MCF 10A (cell line): ENCODE measurements at regions of chr3 and their contacts with region 1.

Region 1: GRCh38 chr3:153043729-153044328 is 118.2 kb upstream of the RAP2B start:
- DNase-seq: peak; percentile 86
- H3K4me3 Mint-ChIP-seq: peak overlapping the region; percentile 63
- H3K27ac Mint-ChIP-seq: peak overlapping the region; percentile 82
- H3K4me1 Mint-ChIP-seq: peaks cover 8% of the 10 kb centered on the region
- H3K27me3 Mint-ChIP-seq: no peaks in the 10 kb centered on the region
- CTCF ChIP-seq: no peak

Region 2: GRCh38 chr3:153061938-153062528 is 18.2 kb after region 1 on chr3:
- CTCF ChIA-PET with region 1: interaction called, 3 read pairs
- POLR2A ChIA-PET with region 1: interaction called, 6 read pairs
- intact Hi-C with region 1: loop called (anchors 1 kb)
- DNase-seq: no peak
- H3K4me3 Mint-ChIP-seq: no peak overlapping the region
- H3K27ac Mint-ChIP-seq: no peak overlapping the region
- H3K4me1 Mint-ChIP-seq: peaks cover 9% of the 10 kb centered on the region
- H3K27me3 Mint-ChIP-seq: no peaks in the 10 kb centered on the region
- CTCF ChIP-seq: no peak

Region 3: GRCh38 chr3:153138276-153139210 is 94.7 kb after region 1 on chr3:
- CTCF ChIA-PET with region 1: interaction called, 3 read pairs
- POLR2A ChIA-PET with region 1: interaction called, 8 read pairs
- intact Hi-C with region 1: loop called (anchors 2 kb)
- DNase-seq: peak; percentile 99
- H3K4me3 Mint-ChIP-seq: peak overlapping the region; percentile 19
- H3K27ac Mint-ChIP-seq: peak overlapping the region; percentile 90
- H3K4me1 Mint-ChIP-seq: peaks cover 31% of the 10 kb centered on the region
- H3K27me3 Mint-ChIP-seq: no peaks in the 10 kb centered on the region
- CTCF ChIP-seq: no peak

Region 4: GRCh38 chr3:153247331-153248330 is 203.8 kb after region 1 on chr3:
- CTCF ChIA-PET with region 1: no interaction called
- POLR2A ChIA-PET with region 1: no interaction called
- intact Hi-C with region 1: no loop called
- DNase-seq: no peak
- H3K4me3 Mint-ChIP-seq: no peak overlapping the region
- H3K27ac Mint-ChIP-seq: no peak overlapping the region
- H3K4me1 Mint-ChIP-seq: peaks cover 18% of the 10 kb centered on the region
- H3K27me3 Mint-ChIP-seq: no peaks in the 10 kb centered on the region
- CTCF ChIP-seq: no peak

Region 5: DNA sequence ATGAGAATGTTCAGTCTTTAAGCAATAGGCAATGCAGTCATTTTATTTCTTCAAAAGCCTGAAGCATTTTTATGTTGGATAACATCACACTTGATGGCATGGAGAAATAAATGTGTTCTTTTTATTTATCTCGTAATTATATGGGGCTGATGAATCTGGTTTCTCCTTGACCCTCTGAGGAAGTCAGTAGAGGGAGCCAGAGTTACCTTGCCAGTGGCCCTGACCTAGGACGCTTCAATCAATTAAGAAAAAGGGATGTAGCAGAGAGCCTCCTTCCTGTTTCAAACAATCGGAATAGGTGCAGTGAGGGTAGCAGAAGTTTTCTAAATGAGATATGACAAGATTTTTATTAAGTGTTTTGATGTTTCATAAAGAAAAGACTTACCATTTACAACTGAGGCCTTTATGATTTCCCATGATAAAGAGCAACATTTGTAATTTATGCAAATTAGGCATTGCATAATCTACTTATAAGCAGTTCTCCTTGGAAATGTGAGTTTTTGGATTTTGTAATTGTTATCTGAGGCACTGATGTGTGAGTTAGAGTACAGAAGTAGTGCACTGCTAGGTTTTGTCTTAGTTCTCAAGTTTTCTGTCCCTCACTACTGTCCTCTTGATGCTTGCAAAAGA is 247.3 kb after region 1 on chr3:
- CTCF ChIA-PET with region 1: interaction called, 19 read pairs
- POLR2A ChIA-PET with region 1: interaction called, 23 read pairs
- intact Hi-C with region 1: loop called (anchors 1 kb)
- DNase-seq: peak; percentile 65
- H3K4me3 Mint-ChIP-seq: no peak overlapping the region
- H3K27ac Mint-ChIP-seq: no peak overlapping the region
- H3K4me1 Mint-ChIP-seq: peaks cover 40% of the 10 kb centered on the region
- H3K27me3 Mint-ChIP-seq: no peaks in the 10 kb centered on the region
- CTCF ChIP-seq: peak; percentile 52